Aorta (tissue), 5 donors: ENCODE measurements at regions of chr4 and their contacts with region 1.

Region 1: DNA sequence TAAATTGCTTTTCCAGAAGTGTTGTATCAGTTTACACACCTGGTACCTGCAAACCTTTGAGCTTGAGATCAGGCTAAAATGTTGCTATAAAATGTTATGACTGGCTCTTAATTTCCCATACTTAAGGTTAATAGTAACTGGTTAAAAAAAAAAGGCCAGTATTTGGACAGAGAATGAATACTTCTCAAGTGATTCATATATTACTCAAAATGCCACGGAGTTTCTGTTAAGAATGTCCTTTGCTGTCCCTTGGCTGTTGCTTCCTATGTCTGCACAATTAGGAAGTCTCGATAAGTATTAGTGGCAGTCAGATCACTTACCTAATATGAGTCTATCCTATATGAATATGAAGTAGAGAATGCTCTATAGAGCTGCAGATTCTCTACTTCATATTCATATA is 232.2 kb upstream of the IGFBP7 start:
- DNase-seq: no peak
- ATAC-seq: no peak
- H3K4me3 ChIP-seq: no peak overlapping the region
- H3K27ac ChIP-seq: no peak overlapping the region
- H3K4me1 ChIP-seq: no peaks in the 10 kb centered on the region
- H3K27me3 ChIP-seq: no peaks in the 10 kb centered on the region

Region 2: DNA sequence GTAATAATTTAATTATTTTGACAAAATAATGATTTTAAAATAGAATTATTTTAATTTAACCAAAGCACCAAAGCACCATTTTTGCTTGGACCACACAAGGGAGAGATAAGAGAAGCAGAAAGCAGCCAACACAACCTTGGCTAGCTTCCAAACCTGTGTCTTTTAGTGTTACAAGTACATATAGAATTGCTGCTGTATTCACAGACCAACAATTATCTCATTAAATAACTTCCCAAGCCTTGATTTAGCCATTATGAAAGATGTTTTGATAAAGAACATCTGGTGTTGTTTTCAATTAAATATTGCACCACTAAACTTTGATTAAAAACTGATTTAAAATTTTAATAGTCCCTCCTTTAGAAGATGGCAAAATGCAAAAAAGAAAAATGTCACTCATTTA is 218.3 kb before region 1 on chr4:
- intact Hi-C with region 1: no loop called
- DNase-seq: no peak
- ATAC-seq: no peak
- H3K4me3 ChIP-seq: no peak overlapping the region
- H3K27ac ChIP-seq: no peak overlapping the region
- H3K4me1 ChIP-seq: peaks cover 0 to 8% of the 10 kb centered on the region in 2 donors
- H3K27me3 ChIP-seq: no peaks in the 10 kb centered on the region

Region 3: DNA sequence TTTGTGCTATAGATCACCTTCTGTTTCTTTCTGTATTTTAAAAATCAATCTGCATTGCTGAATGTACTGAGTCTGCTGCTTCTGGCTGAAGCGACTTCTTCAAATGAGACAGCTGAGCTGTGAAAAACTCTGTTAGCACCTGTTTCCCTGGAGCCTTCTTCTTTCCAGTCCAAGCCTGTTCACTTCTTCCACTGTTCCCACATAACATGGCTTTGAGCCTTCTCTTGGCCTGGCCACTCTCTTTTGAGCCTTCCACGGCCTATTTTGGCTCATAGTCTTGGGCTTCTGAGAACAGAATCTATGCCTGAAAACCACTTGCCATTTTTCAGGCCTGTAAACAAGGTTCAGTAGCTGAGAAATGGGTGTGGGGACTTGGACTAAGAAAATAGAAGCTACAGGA is 99.3 kb before region 1 on chr4:
- intact Hi-C with region 1: no loop called
- DNase-seq: no peak
- ATAC-seq: no peak
- H3K4me3 ChIP-seq: no peak overlapping the region
- H3K27ac ChIP-seq: peak overlapping the region in 1 of 2 donors; percentile 67
- H3K4me1 ChIP-seq: peaks cover 2 to 6% of the 10 kb centered on the region in 2 donors
- H3K27me3 ChIP-seq: no peaks in the 10 kb centered on the region

Region 4: GRCh38 chr4:57426779-57427395 is 84.5 kb after region 1 on chr4:
- intact Hi-C with region 1: loop called in 1 of 2 experiments (anchors 2 kb)
- DNase-seq: peak; percentile 76 to 92
- ATAC-seq: peak; percentile 76
- H3K4me3 ChIP-seq: no peak overlapping the region
- H3K27ac ChIP-seq: no peak overlapping the region
- H3K4me1 ChIP-seq: peaks cover 3 to 6% of the 10 kb centered on the region in 2 donors
- H3K27me3 ChIP-seq: no peaks in the 10 kb centered on the region

Region 5: GRCh38 chr4:57777866-57778265 is 435.5 kb after region 1 on chr4:
- intact Hi-C with region 1: no loop called
- DNase-seq: no peak
- ATAC-seq: no peak
- H3K4me3 ChIP-seq: no peak overlapping the region
- H3K27ac ChIP-seq: no peak overlapping the region
- H3K4me1 ChIP-seq: peaks cover 0 to 2% of the 10 kb centered on the region in 2 donors
- H3K27me3 ChIP-seq: no peaks in the 10 kb centered on the region